Heart left ventricle (tissue), 16 donors: ENCODE measurements at regions of chr11 and their contacts with region 1.

Region 1: DNA sequence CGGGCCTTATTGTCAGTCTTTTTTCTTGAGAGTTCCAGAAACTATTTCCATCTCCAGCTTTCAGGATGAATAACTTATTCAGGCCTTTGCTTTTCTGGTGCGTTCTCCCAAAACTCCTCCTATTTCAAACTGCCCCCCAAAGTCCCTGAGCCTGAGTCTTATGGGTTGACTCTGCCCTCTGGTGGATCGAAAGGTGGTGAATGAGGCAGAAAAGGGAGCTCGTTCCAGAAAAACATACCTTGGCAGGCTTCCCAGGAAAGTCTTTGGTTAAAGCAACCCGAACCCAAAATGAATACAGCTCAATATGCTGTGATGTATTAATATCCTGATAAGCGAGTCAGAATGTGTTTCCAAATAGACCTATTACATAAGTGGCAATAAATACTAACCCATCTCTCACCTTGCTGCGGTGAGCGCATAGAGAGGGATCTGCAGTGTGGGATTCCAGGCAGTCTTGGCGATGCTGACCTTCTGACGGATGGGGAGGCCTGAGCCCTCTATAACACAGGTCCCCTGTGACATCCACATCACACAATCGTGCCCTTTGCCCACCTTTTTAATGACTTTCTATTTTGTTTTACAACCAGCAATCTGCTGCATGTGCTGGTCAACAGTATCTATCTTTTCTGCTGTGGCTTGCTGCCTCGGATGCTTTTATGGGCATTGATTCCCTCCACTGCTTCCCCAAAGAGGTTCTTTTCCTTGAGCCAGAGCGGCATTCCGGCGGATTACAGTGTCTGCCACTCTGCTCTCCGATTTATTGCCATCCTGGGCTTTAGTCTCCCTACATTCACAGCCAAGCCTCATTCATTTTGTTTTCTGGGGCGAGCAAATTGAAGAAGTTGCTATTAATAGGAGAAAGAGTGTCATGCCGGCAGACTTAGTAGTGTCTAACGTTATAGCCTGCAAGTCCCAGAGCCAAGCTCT is 756.8 kb downstream of the NTM start:
- DNase-seq: peak in 4 of 5 donors; percentile 42 to 63 (median 57)
- ATAC-seq: peak in 3 of 4 donors; percentile 54 to 74 (median 72)
- H3K4me3 ChIP-seq: peak overlapping the region in 9 of 12 donors; percentile 10 to 53 (median 39)
- H3K27ac ChIP-seq: peak overlapping the region in 7 of 12 donors; percentile 2 to 51 (median 37)
- H3K4me1 ChIP-seq: peaks cover 0 to 19% (median 13%) of the 10 kb centered on the region in 12 donors
- H3K27me3 ChIP-seq: peaks cover 0 to 6% (median 0%) of the 10 kb centered on the region in 9 donors
- CTCF ChIP-seq: peak; percentile 22 to 68 (median 44)
- POLR2A ChIP-seq: no peak

Region 2: GRCh38 chr11:131694526-131695424 is 432.5 kb before region 1 on chr11:
- intact Hi-C with region 1: loop called in 1 of 10 experiments (anchors 5 kb)
- DNase-seq: peak; percentile 79 to 89 (median 83)
- ATAC-seq: peak; percentile 80 to 94 (median 92)
- H3K4me3 ChIP-seq: peak overlapping the region in 5 of 12 donors; percentile 5 to 23 (median 16)
- H3K27ac ChIP-seq: peak overlapping the region in 1 of 12 donors; percentile 8
- H3K4me1 ChIP-seq: peaks cover 0 to 9% (median 4%) of the 10 kb centered on the region in 12 donors
- H3K27me3 ChIP-seq: peaks cover 0 to 53% (median 7%) of the 10 kb centered on the region in 9 donors
- CTCF ChIP-seq: peak; percentile 83 to 98 (median 95)
- POLR2A ChIP-seq: no peak

Region 3: GRCh38 chr11:131748151-131749050 is 378.8 kb before region 1 on chr11:
- intact Hi-C with region 1: loop called in 4 of 10 experiments (anchors 5 to 10 kb)
- DNase-seq: peak in 3 of 5 donors; percentile 34 to 56 (median 45)
- ATAC-seq: peak in 3 of 4 donors; percentile 74 to 90 (median 75)
- H3K4me3 ChIP-seq: no peak overlapping the region
- H3K27ac ChIP-seq: no peak overlapping the region
- H3K4me1 ChIP-seq: peaks cover 0 to 14% (median 0%) of the 10 kb centered on the region in 12 donors
- H3K27me3 ChIP-seq: peaks cover 0 to 26% (median 0%) of the 10 kb centered on the region in 9 donors
- CTCF ChIP-seq: peak; percentile 58 to 85 (median 73)
- POLR2A ChIP-seq: no peak

Region 4: DNA sequence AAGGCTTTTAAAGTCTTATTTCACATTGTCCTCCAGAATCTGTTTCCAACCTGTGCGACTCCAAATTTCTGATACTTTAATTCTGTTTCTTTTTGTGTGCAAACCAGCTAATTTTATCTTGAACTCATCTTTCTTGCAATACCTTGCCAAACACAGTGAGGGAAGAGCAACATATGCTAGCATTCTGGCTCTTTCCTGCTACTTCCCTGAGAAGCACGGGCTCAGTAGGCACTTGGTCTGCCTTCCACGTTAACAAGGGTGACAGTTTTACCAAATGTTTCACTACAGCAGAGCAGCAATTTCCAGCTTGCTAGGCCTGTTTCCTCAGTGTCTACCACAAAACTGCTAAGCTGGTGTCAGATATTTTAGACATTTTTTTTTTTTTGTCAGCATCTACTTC is 351.0 kb before region 1 on chr11:
- intact Hi-C with region 1: no loop called
- DNase-seq: no peak
- ATAC-seq: no peak
- H3K4me3 ChIP-seq: no peak overlapping the region
- H3K27ac ChIP-seq: no peak overlapping the region
- H3K4me1 ChIP-seq: no peaks in the 10 kb centered on the region
- H3K27me3 ChIP-seq: peaks cover 0 to 17% (median 0%) of the 10 kb centered on the region in 9 donors
- CTCF ChIP-seq: no peak
- POLR2A ChIP-seq: no peak

Region 5: DNA sequence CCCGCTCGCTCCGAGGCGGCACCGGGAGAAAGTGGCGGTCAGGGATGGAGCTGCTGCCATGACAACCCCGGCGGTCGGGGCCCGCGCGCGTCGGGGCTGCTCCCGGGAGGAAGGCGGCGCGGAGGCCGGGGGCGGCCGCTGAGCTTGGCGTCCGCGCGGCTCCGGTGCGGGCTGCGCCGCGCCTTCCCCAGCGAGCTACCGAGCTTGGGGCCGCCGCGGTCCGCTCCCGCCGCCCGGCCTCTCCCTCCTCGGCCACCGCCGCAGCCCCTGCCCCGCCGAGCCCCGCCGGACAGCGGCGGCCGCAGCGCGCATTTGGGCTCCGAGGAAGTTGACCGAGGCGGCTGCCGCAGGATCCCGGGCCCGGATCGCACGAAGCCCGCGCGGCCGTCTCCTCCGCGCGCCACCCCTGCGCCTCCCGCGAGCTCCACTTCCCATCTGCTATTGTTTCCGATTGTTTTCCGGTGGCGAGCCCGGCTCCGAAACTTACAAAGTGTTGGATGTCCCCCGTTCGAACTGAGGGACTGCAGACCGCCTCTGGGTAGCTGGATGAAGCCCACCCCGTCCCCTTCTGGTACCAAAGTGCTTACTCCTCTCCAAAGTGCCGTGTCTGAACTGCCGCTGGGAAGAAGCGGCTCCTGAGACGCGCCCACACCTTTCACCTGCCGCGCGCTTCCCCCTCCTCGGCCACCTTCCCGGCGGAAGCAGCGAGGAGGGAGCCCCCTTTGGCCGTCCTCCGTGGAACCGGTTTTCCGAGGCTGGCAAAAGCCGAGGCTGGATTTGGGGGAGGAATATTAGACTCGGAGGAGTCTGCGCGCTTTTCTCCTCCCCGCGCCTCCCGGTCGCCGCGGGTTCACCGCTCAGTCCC is 216.5 kb before region 1 on chr11:
- intact Hi-C with region 1: loop called in 4 of 10 experiments (anchors 5 to 10 kb)
- DNase-seq: no peak
- ATAC-seq: peak in 3 of 4 donors; percentile 15 to 57 (median 49)
- H3K4me3 ChIP-seq: peak overlapping the region; percentile 6 to 64 (median 48)
- H3K27ac ChIP-seq: peak overlapping the region in 4 of 12 donors; percentile 27 to 51 (median 46)
- H3K4me1 ChIP-seq: peaks cover 0 to 17% (median 0%) of the 10 kb centered on the region in 12 donors
- H3K27me3 ChIP-seq: peaks cover 9 to 76% (median 14%) of the 10 kb centered on the region in 9 donors
- CTCF ChIP-seq: no peak
- POLR2A ChIP-seq: no peak